ENCODE measurements at regions of chr13 and their contacts with region 1.

Region 1: DNA sequence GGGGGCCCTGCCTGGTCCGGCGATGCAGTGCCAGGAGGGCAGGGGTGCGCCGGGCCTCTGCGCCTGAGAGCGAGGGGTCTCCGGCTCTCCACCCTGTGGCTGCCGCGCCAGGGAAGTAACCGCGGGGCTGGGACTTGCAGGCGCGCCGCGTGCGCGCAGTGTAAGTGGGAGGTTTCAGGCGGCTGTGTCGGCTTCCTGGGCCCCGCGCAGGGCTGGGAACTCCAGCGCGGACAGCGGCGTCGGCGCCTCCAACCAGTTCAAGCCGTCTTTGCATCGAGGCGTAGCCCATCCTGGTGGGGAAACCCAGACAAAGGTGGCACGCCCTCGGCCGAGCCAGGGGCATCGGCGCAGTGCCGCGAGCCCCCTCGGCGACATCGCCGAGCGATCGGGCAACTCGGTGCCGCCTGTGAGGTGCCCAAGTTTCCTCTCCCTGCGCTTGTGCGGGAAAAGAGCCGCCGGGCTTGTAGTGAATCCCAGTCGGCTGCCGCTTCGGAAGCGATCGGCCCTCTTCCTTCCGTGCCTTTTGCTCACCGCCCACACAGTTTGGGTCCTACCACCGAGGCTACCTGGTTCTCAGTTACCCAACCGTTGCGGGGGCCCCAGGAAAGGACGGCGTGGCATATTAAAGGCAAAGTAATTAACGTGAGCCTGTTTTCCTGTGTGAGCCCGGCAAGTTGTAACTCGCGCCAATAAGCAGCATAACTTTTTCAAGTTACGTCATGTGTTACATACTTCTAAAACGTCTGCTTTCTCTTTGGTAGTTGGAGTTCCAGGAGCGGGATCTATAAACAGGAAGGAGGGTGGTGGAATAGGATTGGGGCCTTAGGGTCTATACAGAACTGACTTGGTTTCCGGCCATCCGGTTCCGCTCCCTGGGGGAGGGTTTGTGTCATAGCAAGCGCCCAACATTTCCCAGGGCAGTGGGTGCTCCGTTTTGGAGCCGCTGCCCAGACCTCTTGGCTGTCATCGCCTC is 1.2 kb downstream of the LRCH1 start:
- DNase-seq: peak; percentile 82
- ATAC-seq: peak; percentile 66
- H3K4me3 Mint-ChIP-seq: peak overlapping the region; percentile 91
- H3K27ac Mint-ChIP-seq: peak overlapping the region; percentile 91
- H3K4me1 Mint-ChIP-seq: peaks cover 47% of the 10 kb centered on the region
- H3K27me3 Mint-ChIP-seq: no peaks in the 10 kb centered on the region

Region 2: GRCh38 chr13:46052319-46053161 is 501.6 kb before region 1 on chr13 and contains the start of gene ZC3H13:
- CTCF ChIA-PET with region 1: no interaction called
- POLR2A ChIA-PET with region 1: no interaction called
- intact Hi-C with region 1: loop called in 1 of 2 experiments (anchors 2 kb)
- DNase-seq: peak; percentile 96
- ATAC-seq: peak; percentile 99
- H3K4me3 Mint-ChIP-seq: peak within 1 kb of the TSS; percentile 83
- H3K27ac Mint-ChIP-seq: peak within 1 kb of the TSS; percentile 94
- H3K4me1 Mint-ChIP-seq: peaks cover 34% of the 10 kb centered on the region
- H3K27me3 Mint-ChIP-seq: peaks cover 2% of the 10 kb centered on the region
- total RNA-seq, gene ZC3H13: 38.5 to 52.8 TPM

Region 3: GRCh38 chr13:46530084-46530935 is 23.9 kb before region 1 on chr13:
- CTCF ChIA-PET with region 1: interaction called, 13 read pairs
- POLR2A ChIA-PET with region 1: interaction called, 3 read pairs
- intact Hi-C with region 1: no loop called
- DNase-seq: no peak
- ATAC-seq: peak; percentile 76
- H3K4me3 Mint-ChIP-seq: no peak overlapping the region
- H3K27ac Mint-ChIP-seq: peak overlapping the region; percentile 33
- H3K4me1 Mint-ChIP-seq: peaks cover 32% of the 10 kb centered on the region
- H3K27me3 Mint-ChIP-seq: peaks cover 8% of the 10 kb centered on the region

Region 4: GRCh38 chr13:46571189-46571908 is 17.2 kb after region 1 on chr13:
- CTCF ChIA-PET with region 1: interaction called, 9 read pairs
- POLR2A ChIA-PET with region 1: no interaction called
- intact Hi-C with region 1: loop called (anchors 2 kb)
- DNase-seq: no peak
- ATAC-seq: peak; percentile 90
- H3K4me3 Mint-ChIP-seq: no peak overlapping the region
- H3K27ac Mint-ChIP-seq: peak overlapping the region; percentile 26
- H3K4me1 Mint-ChIP-seq: peaks cover 42% of the 10 kb centered on the region
- H3K27me3 Mint-ChIP-seq: no peaks in the 10 kb centered on the region

Region 5: DNA sequence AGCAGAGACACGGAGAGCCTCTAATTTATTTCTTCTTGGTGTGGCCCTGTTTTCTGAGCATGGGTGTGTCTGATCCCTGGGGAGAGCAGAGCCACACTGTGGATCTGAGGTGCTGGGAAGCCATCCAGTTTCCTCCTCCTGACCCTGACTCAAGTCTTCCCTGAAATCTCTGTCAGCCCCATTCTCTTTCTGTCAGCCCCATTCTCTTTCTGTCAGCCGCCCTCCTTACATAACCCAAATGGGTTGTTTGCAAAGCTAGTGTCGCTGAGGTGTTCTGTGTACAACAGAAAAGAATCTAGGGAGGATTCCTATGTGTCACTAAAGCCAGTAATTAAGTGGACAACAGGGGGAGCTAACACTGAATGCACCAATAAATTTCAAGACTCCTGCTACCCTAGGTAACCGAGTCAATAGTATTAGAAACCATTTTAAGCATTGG is 49.0 kb after region 1 on chr13:
- CTCF ChIA-PET with region 1: interaction called, 3 read pairs
- POLR2A ChIA-PET with region 1: no interaction called
- intact Hi-C with region 1: loop called in 1 of 2 experiments (anchors 2 kb)
- DNase-seq: no peak
- ATAC-seq: no peak
- H3K4me3 Mint-ChIP-seq: no peak overlapping the region
- H3K27ac Mint-ChIP-seq: no peak overlapping the region
- H3K4me1 Mint-ChIP-seq: peaks cover 74% of the 10 kb centered on the region
- H3K27me3 Mint-ChIP-seq: no peaks in the 10 kb centered on the region

Region 6: GRCh38 chr13:46721054-46721453 is 166.9 kb after region 1 on chr13:
- CTCF ChIA-PET with region 1: interaction called, 28 read pairs
- POLR2A ChIA-PET with region 1: no interaction called
- intact Hi-C with region 1: loop called (anchors 1 kb)
- DNase-seq: peak; percentile 67
- ATAC-seq: no peak
- H3K4me3 Mint-ChIP-seq: no peak overlapping the region
- H3K27ac Mint-ChIP-seq: no peak overlapping the region
- H3K4me1 Mint-ChIP-seq: no peaks in the 10 kb centered on the region
- H3K27me3 Mint-ChIP-seq: no peaks in the 10 kb centered on the region

Measured in activated CD4-positive, alpha-beta T cell treated with anti-CD3 and anti-CD28 coated beads for 36 hours (primary cell).